ENCODE measurements at regions of chr10 and their contacts with region 1.

Region 1: DNA sequence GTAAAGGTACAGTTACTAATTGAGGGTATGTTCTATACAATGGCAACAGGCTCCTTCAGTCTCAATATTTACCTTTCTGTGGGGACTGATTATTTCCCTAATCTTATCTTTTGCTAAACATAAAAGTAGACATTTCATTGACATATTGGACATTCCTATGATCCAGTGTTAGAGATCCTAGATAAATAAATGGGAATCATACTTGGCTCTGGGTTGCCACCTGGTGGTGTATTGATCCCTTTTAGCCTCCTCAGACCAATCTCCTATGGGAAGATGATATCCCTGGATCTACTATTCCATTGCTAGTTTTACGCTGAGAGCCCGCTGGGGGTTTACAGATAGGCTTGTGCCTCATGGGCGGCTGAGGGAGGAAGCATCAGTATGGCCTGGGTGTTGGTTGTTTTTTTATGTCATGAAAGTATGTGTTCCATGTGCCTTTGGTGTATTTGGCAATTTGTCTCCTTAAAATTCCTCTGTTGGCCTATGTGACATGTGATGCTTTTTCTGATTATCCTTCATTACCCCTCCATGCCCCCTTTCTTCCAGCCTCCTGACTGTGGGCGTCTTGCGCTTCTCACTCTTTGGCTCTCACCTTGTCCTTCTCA is 18.8 kb downstream of the CELF2 start:
- DNase-seq: peak; percentile 70
- H3K4me3 Mint-ChIP-seq: no peak overlapping the region
- H3K27ac Mint-ChIP-seq: no peak overlapping the region
- H3K4me1 Mint-ChIP-seq: peaks cover 6% of the 10 kb centered on the region
- H3K27me3 Mint-ChIP-seq: no peaks in the 10 kb centered on the region
- CTCF ChIP-seq: peak; percentile 56

Region 2: GRCh38 chr10:9331583-9332008 is 1704.9 kb before region 1 on chr10:
- CTCF ChIA-PET with region 1: interaction called, 28 read pairs
- POLR2A ChIA-PET with region 1: interaction called, 4 read pairs
- intact Hi-C with region 1: loop called (anchors 1 kb)
- DNase-seq: peak; percentile 50
- H3K4me3 Mint-ChIP-seq: no peak overlapping the region
- H3K27ac Mint-ChIP-seq: no peak overlapping the region
- H3K4me1 Mint-ChIP-seq: no peaks in the 10 kb centered on the region
- H3K27me3 Mint-ChIP-seq: no peaks in the 10 kb centered on the region
- CTCF ChIP-seq: peak; percentile 71

Region 3: GRCh38 chr10:9427209-9427608 is 1609.3 kb before region 1 on chr10:
- CTCF ChIA-PET with region 1: interaction called, 5 read pairs
- POLR2A ChIA-PET with region 1: no interaction called
- intact Hi-C with region 1: loop called (anchors 5 kb)
- DNase-seq: no peak
- H3K4me3 Mint-ChIP-seq: no peak overlapping the region
- H3K27ac Mint-ChIP-seq: no peak overlapping the region
- H3K4me1 Mint-ChIP-seq: no peaks in the 10 kb centered on the region
- H3K27me3 Mint-ChIP-seq: no peaks in the 10 kb centered on the region
- CTCF ChIP-seq: no peak

Region 4: GRCh38 chr10:10233229-10233628 is 803.3 kb before region 1 on chr10:
- CTCF ChIA-PET with region 1: interaction called, 5 read pairs
- POLR2A ChIA-PET with region 1: no interaction called
- intact Hi-C with region 1: loop called (anchors 1 kb)
- DNase-seq: peak; percentile 6
- H3K4me3 Mint-ChIP-seq: no peak overlapping the region
- H3K27ac Mint-ChIP-seq: no peak overlapping the region
- H3K4me1 Mint-ChIP-seq: peaks cover 34% of the 10 kb centered on the region
- H3K27me3 Mint-ChIP-seq: no peaks in the 10 kb centered on the region
- CTCF ChIP-seq: peak; percentile 11

Region 5: DNA sequence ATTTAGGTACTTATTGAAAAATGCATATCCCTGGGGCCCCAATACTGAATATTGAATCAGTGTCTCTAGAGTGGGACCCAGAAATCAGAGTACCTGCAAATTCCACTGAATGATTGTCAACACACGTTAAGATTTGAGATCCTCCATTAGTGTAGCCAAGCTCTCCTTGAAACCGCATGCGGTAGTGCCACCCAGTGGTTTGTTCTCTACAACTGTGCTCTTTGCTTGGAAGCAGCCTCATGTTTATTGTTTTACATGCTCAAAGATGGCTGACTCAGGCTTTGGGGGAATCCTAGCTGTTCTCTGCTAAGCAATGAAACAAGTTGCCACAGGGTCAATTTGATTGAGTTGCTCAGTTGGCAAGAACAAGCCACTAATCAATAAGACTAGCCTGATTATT is 359.0 kb before region 1 on chr10:
- CTCF ChIA-PET with region 1: interaction called, 15 read pairs
- POLR2A ChIA-PET with region 1: no interaction called
- intact Hi-C with region 1: loop called (anchors 1 kb)
- DNase-seq: peak; percentile 80
- H3K4me3 Mint-ChIP-seq: no peak overlapping the region
- H3K27ac Mint-ChIP-seq: no peak overlapping the region
- H3K4me1 Mint-ChIP-seq: no peaks in the 10 kb centered on the region
- H3K27me3 Mint-ChIP-seq: no peaks in the 10 kb centered on the region
- CTCF ChIP-seq: peak; percentile 67

Measured in MCF 10A (cell line).